Endothelial cell of umbilical vein (primary cell): ENCODE measurements at regions of chr2 and their contacts with region 1.

Region 1: DNA sequence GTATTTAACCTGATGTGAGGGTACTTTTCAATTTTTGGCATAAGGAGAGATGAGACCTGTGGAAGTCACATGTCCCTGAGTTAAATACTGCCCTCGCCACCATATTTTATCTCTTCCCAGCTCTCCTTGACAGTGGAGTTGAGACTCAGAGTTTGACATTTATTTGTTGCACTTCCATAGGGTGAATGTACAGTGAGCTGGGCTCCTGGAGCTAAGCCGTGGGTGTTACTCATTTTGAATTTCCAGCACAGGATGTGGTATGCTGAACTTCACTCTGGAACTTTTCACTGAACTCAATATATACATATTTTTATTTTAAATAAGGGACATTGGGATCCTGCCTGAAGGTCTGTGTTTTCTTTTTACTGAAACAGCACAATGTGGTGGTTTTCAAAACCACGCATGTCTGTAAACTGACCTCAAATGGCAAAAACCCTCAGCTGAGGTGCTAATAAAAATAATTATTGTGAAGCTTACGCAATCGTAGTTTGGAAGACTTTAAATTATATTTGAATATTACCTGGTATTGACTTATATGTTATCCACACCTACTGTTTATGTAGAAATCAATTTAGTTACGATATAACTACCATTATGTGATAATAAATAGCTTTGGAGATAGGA is 12.1 kb downstream of the RNF144A start:
- DNase-seq: no peak
- H3K4me3 ChIP-seq: no peak overlapping the region
- H3K27ac ChIP-seq: no peak overlapping the region
- H3K4me1 ChIP-seq: no peaks in the 10 kb centered on the region
- H3K27me3 ChIP-seq: no peaks in the 10 kb centered on the region
- CTCF ChIP-seq: no peak
- POLR2A ChIP-seq: no peak

Region 2: GRCh38 chr2:6946722-6947121 is 17.4 kb after region 1 on chr2:
- CTCF ChIA-PET with region 1: no interaction called
- POLR2A ChIA-PET with region 1: no interaction called
- dilution Hi-C with region 1: no loop called
- intact Hi-C with region 1: loop called (anchors 2 kb)
- DNase-seq: peak; percentile 63
- H3K4me3 ChIP-seq: no peak overlapping the region
- H3K27ac ChIP-seq: no peak overlapping the region
- H3K4me1 ChIP-seq: peaks cover 9% of the 10 kb centered on the region
- H3K27me3 ChIP-seq: no peaks in the 10 kb centered on the region
- CTCF ChIP-seq: no peak
- POLR2A ChIP-seq: no peak